ENCODE measurements at regions of chr1 and their contacts with region 1.

Region 1: DNA sequence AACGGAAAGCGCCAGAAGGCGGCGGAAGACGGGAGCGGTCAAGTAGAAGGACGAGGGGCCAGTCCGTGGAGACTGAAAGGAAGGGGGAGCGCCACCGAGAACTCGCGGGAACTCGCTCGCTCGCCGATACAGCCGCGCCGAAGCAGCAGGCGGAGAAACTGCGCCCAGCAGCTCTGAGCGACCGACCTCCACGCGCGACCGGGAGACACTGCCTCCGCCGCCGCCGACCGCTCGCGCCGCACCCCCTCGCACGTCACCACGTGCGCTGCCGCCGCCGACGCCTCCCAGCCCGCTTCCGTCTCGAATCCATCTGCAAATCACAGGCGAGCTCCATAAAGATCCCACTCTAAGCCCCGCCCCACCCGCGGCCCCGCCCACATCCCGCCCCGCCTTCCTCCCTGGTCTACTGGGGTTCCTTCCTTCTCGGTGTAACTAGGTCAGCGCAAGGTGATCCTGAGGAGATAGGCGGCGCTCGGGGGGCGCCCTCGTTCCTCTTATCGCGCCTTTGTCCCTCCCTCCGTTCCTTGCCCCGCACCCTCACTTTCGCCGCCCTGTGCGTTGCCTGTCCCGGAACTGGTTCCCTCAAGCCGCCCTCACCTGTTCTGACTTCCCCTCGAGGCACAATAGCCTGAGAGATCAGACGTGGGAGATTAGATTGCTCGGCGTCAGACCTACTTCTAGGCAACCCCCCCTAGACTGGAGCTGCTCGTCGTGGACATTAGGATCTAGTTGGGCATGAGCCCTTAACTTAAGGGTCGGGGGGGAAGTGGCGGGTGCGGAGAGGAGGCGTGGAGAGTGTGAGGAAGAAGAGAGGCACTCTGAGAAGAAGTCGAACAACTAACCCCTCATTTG is at the start of gene IVNS1ABP:
- DNase-seq: peak; percentile 92
- H3K4me3 Mint-ChIP-seq: peak within 1 kb of the TSS; percentile 94
- H3K27ac Mint-ChIP-seq: peak within 1 kb of the TSS; percentile 97
- H3K4me1 Mint-ChIP-seq: peaks cover 50% of the 10 kb centered on the region
- H3K27me3 Mint-ChIP-seq: no peaks in the 10 kb centered on the region
- total RNA-seq, gene IVNS1ABP: 207 and 225 TPM in 2 replicates

Region 2: DNA sequence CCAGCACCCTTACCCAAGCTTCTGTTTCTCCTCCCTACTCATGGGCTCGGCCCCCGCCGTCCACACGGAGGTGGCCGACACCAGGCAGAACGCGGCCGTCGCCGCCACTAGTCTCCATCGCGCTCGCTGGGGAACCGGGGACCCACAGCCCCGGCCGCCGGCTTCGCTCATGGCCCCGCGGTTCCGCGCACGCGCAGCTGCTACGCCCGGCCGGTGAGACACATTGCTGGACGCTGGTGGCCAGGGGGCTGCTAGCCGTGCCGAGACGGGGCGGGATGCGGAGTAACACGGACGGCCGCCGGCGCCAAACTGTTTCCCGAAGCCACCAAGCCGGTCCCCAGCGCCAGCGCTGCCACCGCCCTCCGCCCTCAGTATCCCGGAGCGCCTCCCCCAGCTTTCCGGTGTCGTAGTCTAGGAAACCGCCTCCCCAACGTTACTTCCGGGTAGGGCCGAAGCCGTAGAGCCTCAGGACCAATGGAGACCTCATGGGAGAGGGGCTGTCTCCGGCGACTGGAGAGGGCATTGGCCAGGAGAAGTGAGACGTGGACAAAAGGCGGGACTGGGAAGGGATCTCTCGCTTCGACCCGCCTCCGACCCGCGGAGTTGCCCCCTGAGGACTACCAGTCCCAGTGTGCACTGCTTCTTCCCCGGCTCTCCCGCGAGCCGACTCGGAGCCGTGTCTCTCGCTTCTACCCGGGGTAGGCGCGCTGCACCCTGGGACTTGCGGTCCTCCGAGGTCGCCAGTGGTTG is 562.6 kb before region 1 on chr1 and contains the start of gene EDEM3:
- intact Hi-C with region 1: loop called (anchors 1 kb)
- DNase-seq: peak; percentile 97
- H3K4me3 Mint-ChIP-seq: peak within 1 kb of the TSS; percentile 89
- H3K27ac Mint-ChIP-seq: peak within 1 kb of the TSS; percentile 77
- H3K4me1 Mint-ChIP-seq: peaks cover 29% of the 10 kb centered on the region
- H3K27me3 Mint-ChIP-seq: peaks cover 5% of the 10 kb centered on the region
- total RNA-seq, gene EDEM3: 23.8 and 28.5 TPM in 2 replicates

Region 3: DNA sequence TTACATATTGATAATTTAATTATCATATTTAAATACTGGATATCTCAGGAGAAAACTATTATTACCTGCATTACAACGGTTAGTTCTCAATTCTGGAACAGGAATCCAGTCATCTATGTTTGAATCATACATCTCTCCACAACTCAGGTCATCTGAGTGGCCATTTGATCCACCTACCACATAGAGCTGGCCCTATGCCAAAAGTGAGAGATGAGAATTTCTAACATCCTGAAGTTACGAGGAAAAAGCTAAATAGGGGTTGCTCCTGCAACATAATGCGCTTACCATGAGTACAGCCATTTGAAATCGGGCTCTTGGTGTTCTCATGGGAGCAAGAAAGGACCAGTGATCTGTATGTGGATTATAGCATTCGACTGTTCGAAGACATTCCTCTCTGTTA is 17.1 kb before region 1 on chr1:
- intact Hi-C with region 1: loop called (anchors 1 kb)
- DNase-seq: no peak
- H3K4me3 Mint-ChIP-seq: no peak overlapping the region
- H3K27ac Mint-ChIP-seq: no peak overlapping the region
- H3K4me1 Mint-ChIP-seq: peaks cover 33% of the 10 kb centered on the region
- H3K27me3 Mint-ChIP-seq: no peaks in the 10 kb centered on the region

Region 4: GRCh38 chr1:185365951-185366350 is 48.7 kb after region 1 on chr1:
- intact Hi-C with region 1: no loop called
- DNase-seq: no peak
- H3K4me3 Mint-ChIP-seq: no peak overlapping the region
- H3K27ac Mint-ChIP-seq: no peak overlapping the region
- H3K4me1 Mint-ChIP-seq: peaks cover 42% of the 10 kb centered on the region
- H3K27me3 Mint-ChIP-seq: peaks cover 6% of the 10 kb centered on the region

Region 5: DNA sequence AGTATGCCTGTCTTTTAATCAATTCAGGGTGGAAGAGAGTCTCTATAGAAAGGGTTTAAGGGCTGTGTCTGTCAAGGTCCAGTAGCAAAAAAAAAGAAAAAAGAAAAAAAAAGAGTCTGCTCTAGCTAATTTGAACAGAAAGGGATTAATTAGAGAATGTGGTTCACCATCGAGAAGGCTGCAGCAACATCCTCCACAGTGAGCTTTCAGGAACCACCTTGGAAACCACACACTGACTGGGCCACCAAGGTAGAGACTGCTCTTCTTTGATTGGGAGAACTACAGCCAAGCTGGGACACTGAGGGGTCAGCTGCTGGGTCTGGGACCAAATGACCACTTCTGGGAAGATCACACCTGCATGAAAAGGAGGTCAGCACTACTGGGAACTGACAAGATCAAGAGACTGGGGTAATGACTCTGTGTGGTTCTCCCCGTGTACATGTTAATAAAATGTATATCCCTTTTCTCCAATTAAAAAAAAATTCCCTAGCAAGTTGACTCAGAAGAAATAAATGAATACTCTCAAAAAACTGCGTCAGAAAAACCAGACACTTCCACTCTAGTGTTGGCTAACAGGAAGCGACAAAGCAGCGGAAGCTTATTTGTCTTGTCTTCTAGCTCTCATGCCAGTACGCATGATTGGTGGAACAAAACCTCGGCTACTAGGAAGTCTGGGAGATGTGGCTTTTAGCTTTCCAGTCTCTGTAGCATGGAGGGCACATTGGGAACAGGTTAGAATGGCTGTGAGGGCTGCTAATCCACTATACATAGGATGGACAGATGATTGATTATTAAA is 59.8 kb after region 1 on chr1:
- intact Hi-C with region 1: loop called (anchors 2 kb)
- DNase-seq: no peak
- H3K4me3 Mint-ChIP-seq: no peak overlapping the region
- H3K27ac Mint-ChIP-seq: no peak overlapping the region
- H3K4me1 Mint-ChIP-seq: peaks cover 27% of the 10 kb centered on the region
- H3K27me3 Mint-ChIP-seq: no peaks in the 10 kb centered on the region

Region 6: DNA sequence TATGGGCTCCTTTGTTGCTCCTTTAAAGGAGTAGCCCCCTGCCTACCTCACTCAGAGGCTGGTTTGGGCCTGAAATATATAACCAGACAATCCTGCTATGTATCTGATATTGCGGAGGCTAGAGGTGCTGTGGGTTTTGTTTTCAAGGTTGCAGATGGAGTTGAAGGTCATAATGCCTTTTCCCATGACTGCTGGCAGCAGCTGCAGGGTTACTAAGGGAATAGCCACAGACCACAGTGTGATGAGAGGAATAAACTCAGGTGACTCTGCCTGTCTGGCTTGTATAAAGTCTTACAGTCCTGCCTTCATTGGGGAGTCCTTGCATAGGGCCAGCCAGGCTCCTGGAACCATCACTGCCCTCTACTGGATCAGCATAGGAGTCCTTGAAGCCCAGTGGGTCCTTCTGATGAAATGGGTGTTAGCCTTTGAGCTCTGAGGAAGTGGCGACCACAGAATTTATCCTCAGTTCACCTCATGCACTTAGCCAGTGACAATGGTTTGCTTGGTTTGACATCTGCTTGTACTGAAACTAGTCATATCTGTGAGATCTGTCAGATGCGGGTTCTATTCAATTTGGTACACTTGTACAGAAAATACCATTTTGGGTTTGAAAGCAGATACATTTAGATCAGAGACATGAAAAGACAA is 242.5 kb after region 1 on chr1:
- intact Hi-C with region 1: loop called (anchors 1 kb)
- DNase-seq: peak; percentile 74
- H3K4me3 Mint-ChIP-seq: peak overlapping the region; percentile 52
- H3K27ac Mint-ChIP-seq: peak overlapping the region; percentile 66
- H3K4me1 Mint-ChIP-seq: peaks cover 52% of the 10 kb centered on the region
- H3K27me3 Mint-ChIP-seq: no peaks in the 10 kb centered on the region

Region 7: GRCh38 chr1:185670187-185670627 is 352.9 kb after region 1 on chr1:
- intact Hi-C with region 1: loop called (anchors 1 kb)
- DNase-seq: peak; percentile 28
- H3K4me3 Mint-ChIP-seq: no peak overlapping the region
- H3K27ac Mint-ChIP-seq: no peak overlapping the region
- H3K4me1 Mint-ChIP-seq: peaks cover 39% of the 10 kb centered on the region
- H3K27me3 Mint-ChIP-seq: peaks cover 2% of the 10 kb centered on the region

Region 8: DNA sequence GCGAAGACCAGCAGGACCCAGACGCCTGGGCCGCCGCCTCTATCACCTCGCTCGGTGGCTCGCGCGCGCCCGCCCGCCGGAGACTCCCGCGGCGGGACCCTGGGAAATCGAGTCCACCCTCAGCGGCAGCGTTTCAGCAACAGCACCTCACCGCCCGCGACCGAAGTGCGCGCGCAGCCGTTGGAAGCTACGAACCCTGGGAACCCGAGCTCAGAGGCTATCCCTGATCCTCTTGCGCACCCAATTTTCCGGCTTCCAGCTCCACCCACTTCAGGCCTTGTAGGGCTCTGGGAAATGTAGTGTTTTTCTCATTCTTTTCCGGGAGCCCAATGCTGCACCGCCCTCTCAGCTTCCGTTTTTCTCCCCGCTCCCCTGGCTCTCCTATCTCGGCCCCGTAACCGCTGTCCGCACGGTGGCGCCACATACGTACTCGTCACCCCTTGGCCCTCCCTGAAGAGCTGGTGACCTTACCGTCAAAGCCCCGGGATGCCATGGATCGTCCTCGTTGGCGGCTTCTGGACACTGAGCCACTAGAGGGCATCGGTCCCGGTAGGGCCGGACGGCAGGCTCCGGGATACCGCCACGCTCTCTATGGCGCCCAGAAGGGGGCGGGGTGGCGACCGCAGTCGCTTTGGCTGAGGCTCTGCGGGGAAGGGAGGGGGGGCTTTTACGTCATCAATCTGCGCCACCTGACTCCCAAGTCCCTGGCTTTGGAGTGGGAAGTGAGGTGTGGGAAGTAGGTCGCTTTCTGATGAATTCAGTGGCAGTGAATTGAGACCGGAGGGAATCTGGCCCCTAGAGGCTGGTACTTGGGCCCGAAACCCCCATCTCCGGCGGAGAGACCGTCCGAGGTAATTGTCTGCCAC is 1058.1 kb after region 1 on chr1 and contains the starts of genes ODR4 and TPR:
- intact Hi-C with region 1: loop called (anchors 1 kb)
- DNase-seq: peak; percentile 96
- H3K4me3 Mint-ChIP-seq: peak within 1 kb of the TSS; percentile 100
- H3K27ac Mint-ChIP-seq: peak within 1 kb of the TSS; percentile 96
- H3K4me1 Mint-ChIP-seq: peaks cover 59% of the 10 kb centered on the region
- H3K27me3 Mint-ChIP-seq: peaks cover 4% of the 10 kb centered on the region
- total RNA-seq, gene ODR4: 15.5 and 17.7 TPM in 2 replicates
- total RNA-seq, gene TPR: 174 and 179 TPM in 2 replicates